ENCODE measurements at regions of chr12 and their contacts with region 1.

Region 1: GRCh38 chr12:114245555-114245954 is 160.4 kb downstream of the TBX5 start:
- DNase-seq: no peak
- ATAC-seq: peak in 1 of 2 donors; percentile 78
- H3K4me3 ChIP-seq: no peak overlapping the region
- H3K27ac ChIP-seq: no peak overlapping the region
- H3K4me1 ChIP-seq: peaks cover 3% of the 10 kb centered on the region
- H3K27me3 ChIP-seq: no peaks in the 10 kb centered on the region

Region 2: GRCh38 chr12:114339626-114340025 is 94.1 kb after region 1 on chr12:
- intact Hi-C with region 1: loop called in 1 of 4 experiments (anchors 10 kb)
- DNase-seq: no peak
- ATAC-seq: no peak
- H3K4me3 ChIP-seq: no peak overlapping the region
- H3K27ac ChIP-seq: no peak overlapping the region
- H3K4me1 ChIP-seq: peaks cover 4% of the 10 kb centered on the region
- H3K27me3 ChIP-seq: no peaks in the 10 kb centered on the region